Panc1 (cell line): ENCODE measurements at regions of chr1 and their contacts with region 1.

Region 1: GRCh38 chr1:31196685-31197084 is 43.0 kb downstream of the NKAIN1 start:
- DNase-seq: no peak
- ATAC-seq: no peak
- H3K4me3 ChIP-seq: no peak overlapping the region
- H3K27ac ChIP-seq: no peak overlapping the region
- H3K4me1 ChIP-seq: no peaks in the 10 kb centered on the region
- H3K27me3 ChIP-seq: no peaks in the 10 kb centered on the region
- CTCF ChIP-seq: no peak

Region 2: DNA sequence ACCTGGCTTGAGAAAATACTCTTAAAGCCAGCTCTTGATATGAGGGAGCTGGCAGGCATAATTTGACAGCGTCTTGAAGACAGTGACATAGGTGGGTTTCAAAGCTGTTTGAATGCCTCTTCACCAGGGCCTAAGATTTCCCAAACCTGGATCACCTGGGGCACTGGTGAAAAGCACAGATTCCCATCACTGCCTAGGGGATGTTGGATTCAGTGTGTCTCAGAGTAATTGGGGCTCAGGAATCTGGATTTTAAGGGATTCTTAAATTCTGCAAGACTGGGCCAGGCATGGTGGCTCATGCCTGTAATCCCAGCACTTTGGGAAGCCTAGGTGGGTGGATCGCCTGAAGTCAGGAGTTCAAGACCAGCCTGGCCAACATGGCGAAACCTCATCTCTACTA is 22.9 kb before region 1 on chr1:
- CTCF ChIA-PET with region 1: no interaction called
- POLR2A ChIA-PET with region 1: interaction called, 11 read pairs
- in situ Hi-C with region 1: no loop called
- intact Hi-C with region 1: no loop called
- DNase-seq: no peak
- ATAC-seq: no peak
- H3K4me3 ChIP-seq: no peak overlapping the region
- H3K27ac ChIP-seq: no peak overlapping the region
- H3K4me1 ChIP-seq: peaks cover 4% of the 10 kb centered on the region; the same call in 1 of the 2 replicates
- H3K27me3 ChIP-seq: no peaks in the 10 kb centered on the region
- CTCF ChIP-seq: no peak

Region 3: GRCh38 chr1:31216016-31216415 is 19.3 kb after region 1 on chr1:
- CTCF ChIA-PET with region 1: no interaction called
- POLR2A ChIA-PET with region 1: no interaction called
- in situ Hi-C with region 1: no loop called
- intact Hi-C with region 1: no loop called
- DNase-seq: no peak
- ATAC-seq: no peak
- H3K4me3 ChIP-seq: no peak overlapping the region
- H3K27ac ChIP-seq: no peak overlapping the region
- H3K4me1 ChIP-seq: no peaks in the 10 kb centered on the region
- H3K27me3 ChIP-seq: no peaks in the 10 kb centered on the region
- CTCF ChIP-seq: no peak

Region 4: GRCh38 chr1:31264790-31265386 is 68.2 kb after region 1 on chr1:
- CTCF ChIA-PET with region 1: no interaction called
- POLR2A ChIA-PET with region 1: no interaction called
- in situ Hi-C with region 1: loop called (anchors 5 kb)
- intact Hi-C with region 1: no loop called
- DNase-seq: no peak
- ATAC-seq: no peak
- H3K4me3 ChIP-seq: no peak overlapping the region
- H3K27ac ChIP-seq: no peak overlapping the region
- H3K4me1 ChIP-seq: no peaks in the 10 kb centered on the region
- H3K27me3 ChIP-seq: no peaks in the 10 kb centered on the region
- CTCF ChIP-seq: no peak

Region 5: DNA sequence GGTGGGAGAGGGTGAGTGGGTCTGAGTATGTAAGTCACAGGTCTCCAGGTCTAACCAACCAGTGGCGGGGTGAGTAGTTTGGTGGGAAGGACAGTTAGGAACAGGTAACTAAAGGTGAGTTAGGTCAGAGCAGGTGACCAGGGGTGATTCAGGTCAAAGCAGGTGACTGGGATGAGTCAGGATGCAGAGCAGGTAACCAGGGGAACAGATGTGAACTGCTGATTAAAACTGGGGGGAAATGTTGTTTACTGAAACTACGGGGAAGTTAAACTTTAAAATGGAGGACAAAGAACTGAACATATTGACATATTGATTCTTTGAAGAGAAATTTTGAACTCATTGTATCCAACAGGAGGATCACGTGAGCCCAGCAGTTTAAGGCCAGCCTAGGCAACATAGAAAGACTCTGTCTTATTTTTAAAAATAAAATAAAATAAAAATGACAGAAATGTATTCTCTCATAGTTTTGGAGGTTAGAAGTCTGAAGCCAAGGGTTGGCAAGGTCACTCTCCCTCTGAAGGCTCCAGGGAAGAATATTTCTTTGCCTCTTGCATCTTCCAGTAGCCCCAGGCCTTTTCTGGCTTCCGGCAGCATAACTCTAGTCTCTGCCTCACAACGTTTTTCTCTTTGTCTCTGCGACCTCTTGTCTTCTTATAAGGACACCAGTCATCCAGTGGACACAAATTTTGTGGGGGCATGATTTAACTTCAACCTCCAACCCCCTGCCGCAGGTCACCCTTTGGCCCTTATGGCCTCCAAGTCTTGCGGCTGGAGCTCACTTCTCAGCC is 315.4 kb after region 1 on chr1:
- CTCF ChIA-PET with region 1: no interaction called
- POLR2A ChIA-PET with region 1: no interaction called
- in situ Hi-C with region 1: no loop called
- intact Hi-C with region 1: no loop called
- DNase-seq: no peak
- ATAC-seq: no peak
- H3K4me3 ChIP-seq: no peak overlapping the region
- H3K27ac ChIP-seq: no peak overlapping the region
- H3K4me1 ChIP-seq: no peaks in the 10 kb centered on the region
- H3K27me3 ChIP-seq: no peaks in the 10 kb centered on the region
- CTCF ChIP-seq: no peak